Caco-2 (cell line): ENCODE measurements at regions of chr3 and their contacts with region 1.

Region 1: GRCh38 chr3:3744826-3745225 is 54.4 kb upstream of the LRRN1 start:
- DNase-seq: no peak
- H3K4me3 ChIP-seq: no peak overlapping the region
- H3K4me3 Mint-ChIP-seq: no peak overlapping the region
- H3K27ac Mint-ChIP-seq: no peak overlapping the region
- H3K4me1 ChIP-seq: no peaks in the 10 kb centered on the region
- H3K4me1 Mint-ChIP-seq: no peaks in the 10 kb centered on the region
- H3K27me3 ChIP-seq: no peaks in the 10 kb centered on the region
- H3K27me3 Mint-ChIP-seq: no peaks in the 10 kb centered on the region
- CTCF ChIP-seq: no peak

Region 2: DNA sequence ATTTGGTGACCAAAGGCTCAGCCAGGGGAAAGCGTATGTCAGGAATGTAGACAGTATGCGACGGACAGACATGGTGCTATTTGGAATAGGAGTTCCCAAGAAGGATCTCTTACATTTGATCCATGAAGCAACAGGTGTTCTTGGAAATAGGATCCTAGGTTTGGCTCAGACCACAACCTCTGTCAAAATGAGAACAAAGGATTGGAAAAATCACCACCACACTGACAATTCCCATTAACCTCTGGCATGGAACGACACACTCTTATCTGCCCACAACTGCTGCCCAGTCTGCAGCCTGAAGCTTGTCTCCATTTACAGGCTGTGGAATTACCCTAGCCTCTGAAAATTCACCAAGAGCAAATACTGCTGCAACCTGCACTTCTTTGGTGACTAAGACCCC is 20.8 kb after region 1 on chr3:
- CTCF ChIA-PET with region 1: no interaction called
- POLR2A ChIA-PET with region 1: no interaction called
- intact Hi-C with region 1: loop called (anchors 1 kb)
- DNase-seq: no peak
- H3K4me3 ChIP-seq: no peak overlapping the region
- H3K4me3 Mint-ChIP-seq: no peak overlapping the region
- H3K27ac Mint-ChIP-seq: no peak overlapping the region
- H3K4me1 ChIP-seq: no peaks in the 10 kb centered on the region
- H3K4me1 Mint-ChIP-seq: no peaks in the 10 kb centered on the region
- H3K27me3 ChIP-seq: no peaks in the 10 kb centered on the region
- H3K27me3 Mint-ChIP-seq: no peaks in the 10 kb centered on the region
- CTCF ChIP-seq: no peak

Region 3: DNA sequence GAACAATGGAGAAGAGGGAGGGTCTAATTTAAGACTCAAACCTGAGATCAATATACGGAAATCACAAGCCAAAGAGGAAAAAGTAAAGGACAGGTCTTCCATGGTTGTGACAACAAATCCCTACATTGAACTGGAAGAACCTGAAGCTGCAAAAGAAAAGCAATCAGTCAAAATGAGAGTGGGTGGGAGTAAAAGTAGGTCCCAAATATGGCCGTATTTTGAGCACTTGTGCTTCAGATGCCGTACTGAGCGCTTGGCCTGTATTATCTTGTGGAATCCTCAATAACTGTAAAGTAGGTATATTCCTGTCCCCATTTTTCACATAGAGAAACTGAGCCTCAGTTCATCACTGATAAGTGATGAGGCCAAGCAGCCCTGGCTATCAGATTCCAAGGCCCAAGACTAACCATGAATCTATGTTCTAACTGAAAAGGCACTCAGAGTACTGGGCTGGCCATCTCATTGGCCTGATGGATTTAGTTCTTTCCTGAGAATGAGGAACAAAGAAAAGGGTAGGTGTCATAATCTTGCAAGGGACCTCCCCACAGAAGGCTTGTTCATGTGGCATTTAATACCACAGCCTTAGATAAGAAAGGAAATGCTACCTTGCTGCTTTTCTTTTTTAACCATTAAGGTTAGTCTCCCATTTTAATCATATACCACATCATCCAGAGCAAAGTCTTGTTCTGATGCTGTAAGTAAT is 106.9 kb after region 1 on chr3:
- CTCF ChIA-PET with region 1: no interaction called
- POLR2A ChIA-PET with region 1: no interaction called
- intact Hi-C with region 1: no loop called
- DNase-seq: no peak
- H3K4me3 ChIP-seq: no peak overlapping the region
- H3K4me3 Mint-ChIP-seq: no peak overlapping the region
- H3K27ac Mint-ChIP-seq: no peak overlapping the region
- H3K4me1 ChIP-seq: no peaks in the 10 kb centered on the region
- H3K4me1 Mint-ChIP-seq: no peaks in the 10 kb centered on the region
- H3K27me3 ChIP-seq: no peaks in the 10 kb centered on the region
- H3K27me3 Mint-ChIP-seq: no peaks in the 10 kb centered on the region
- CTCF ChIP-seq: no peak